ENCODE measurements at regions of chr5 and their contacts with region 1.

Region 1: GRCh38 chr5:123398058-123398733 is 25.0 kb downstream of the CEP120 start:
- DNase-seq: peak in 1 of 9 experiments; percentile 9
- ATAC-seq: no peak
- H3K4me3 ChIP-seq: no peak overlapping the region
- H3K4me3 Mint-ChIP-seq: no peak overlapping the region
- H3K27ac ChIP-seq: no peak overlapping the region
- H3K27ac Mint-ChIP-seq: no peak overlapping the region
- H3K4me1 ChIP-seq: no peaks in the 10 kb centered on the region
- H3K4me1 Mint-ChIP-seq: no peaks in the 10 kb centered on the region
- H3K27me3 ChIP-seq: no peaks in the 10 kb centered on the region
- H3K27me3 Mint-ChIP-seq: no peaks in the 10 kb centered on the region
- CTCF ChIP-seq: no peak

Region 2: DNA sequence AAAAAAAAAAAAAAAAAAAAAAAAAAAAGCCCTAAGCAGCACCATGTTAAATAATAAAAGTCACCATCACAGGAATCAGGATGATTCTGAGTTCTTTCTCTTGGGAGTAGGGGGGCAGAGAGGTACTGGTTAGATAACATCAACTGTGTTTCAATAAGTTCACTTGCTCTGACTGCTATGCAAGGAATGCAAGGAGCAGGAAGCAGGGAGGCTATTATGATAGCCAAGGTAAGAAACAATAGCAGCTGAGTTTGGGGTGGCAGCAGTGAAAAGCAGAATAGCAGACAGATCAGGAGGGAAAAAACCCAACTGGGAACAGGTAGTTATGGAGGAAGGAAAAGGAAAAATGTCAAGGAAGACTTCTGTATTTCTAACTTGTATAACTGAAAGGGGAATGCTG is 16.8 kb after region 1 on chr5:
- CTCF ChIA-PET with region 1: no interaction called
- POLR2A ChIA-PET with region 1: no interaction called
- intact Hi-C with region 1: loop called in 1 of 2 experiments (anchors 2 kb)
- DNase-seq: no peak
- ATAC-seq: no peak
- H3K4me3 ChIP-seq: no peak overlapping the region
- H3K4me3 Mint-ChIP-seq: no peak overlapping the region
- H3K27ac ChIP-seq: no peak overlapping the region
- H3K27ac Mint-ChIP-seq: peak overlapping the region; percentile 41
- H3K4me1 ChIP-seq: peaks cover 7% of the 10 kb centered on the region
- H3K4me1 Mint-ChIP-seq: peaks cover 47% of the 10 kb centered on the region
- H3K27me3 ChIP-seq: no peaks in the 10 kb centered on the region
- H3K27me3 Mint-ChIP-seq: no peaks in the 10 kb centered on the region
- CTCF ChIP-seq: no peak

Region 3: GRCh38 chr5:123598028-123598689 is 200.0 kb after region 1 on chr5:
- CTCF ChIA-PET with region 1: no interaction called
- POLR2A ChIA-PET with region 1: no interaction called
- intact Hi-C with region 1: loop called in 1 of 2 experiments (anchors 5 kb)
- DNase-seq: no peak
- ATAC-seq: no peak
- H3K4me3 ChIP-seq: no peak overlapping the region
- H3K4me3 Mint-ChIP-seq: no peak overlapping the region
- H3K27ac ChIP-seq: no peak overlapping the region
- H3K27ac Mint-ChIP-seq: peak overlapping the region; percentile 25
- H3K4me1 ChIP-seq: no peaks in the 10 kb centered on the region
- H3K4me1 Mint-ChIP-seq: peaks cover 3% of the 10 kb centered on the region
- H3K27me3 ChIP-seq: no peaks in the 10 kb centered on the region
- H3K27me3 Mint-ChIP-seq: no peaks in the 10 kb centered on the region
- CTCF ChIP-seq: no peak

Measured in CD8-positive, alpha-beta T cell (primary cell).